Endothelial cell of umbilical vein (primary cell): ENCODE measurements at regions of chr7 and their contacts with region 1.

Region 1: GRCh38 chr7:116354546-116355408 is 144.4 kb downstream of the TES start:
- DNase-seq: peak; percentile 99
- H3K4me3 ChIP-seq: peak overlapping the region in 1 of 3 experiments; percentile 14
- H3K27ac ChIP-seq: peak overlapping the region; percentile 99
- H3K4me1 ChIP-seq: peaks cover 63% of the 10 kb centered on the region
- H3K27me3 ChIP-seq: no peaks in the 10 kb centered on the region
- CTCF ChIP-seq: no peak
- POLR2A ChIP-seq: no peak

Region 2: GRCh38 chr7:116258734-116259133 is 96.0 kb before region 1 on chr7:
- CTCF ChIA-PET with region 1: interaction called, 4 read pairs
- POLR2A ChIA-PET with region 1: interaction called, 4 read pairs
- dilution Hi-C with region 1: no loop called
- intact Hi-C with region 1: loop called (anchors 1 kb)
- DNase-seq: peak; percentile 85
- H3K4me3 ChIP-seq: no peak overlapping the region
- H3K27ac ChIP-seq: peak overlapping the region; percentile 32
- H3K4me1 ChIP-seq: peaks cover 28% of the 10 kb centered on the region
- H3K27me3 ChIP-seq: no peaks in the 10 kb centered on the region
- CTCF ChIP-seq: peak; percentile 43 to 48
- POLR2A ChIP-seq: peak; percentile 22

Region 3: DNA sequence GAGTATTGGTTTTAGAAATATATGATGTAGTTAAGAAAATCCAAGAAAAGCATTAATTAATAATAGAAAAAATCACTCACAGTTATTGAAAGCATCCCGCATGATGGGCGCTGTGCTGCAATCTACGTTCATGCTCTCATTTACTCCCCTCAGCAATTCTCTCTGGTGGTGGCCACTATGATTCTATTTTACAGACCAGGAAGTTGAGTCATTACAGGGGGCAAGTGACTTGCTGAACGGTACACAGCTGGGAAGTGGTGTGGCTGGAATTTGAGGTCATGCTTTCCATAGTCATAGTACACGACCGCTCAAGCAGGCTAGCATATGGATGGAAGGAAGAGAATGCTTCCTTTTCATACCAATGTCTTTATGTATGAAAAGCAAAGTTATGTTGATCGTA is 27.0 kb before region 1 on chr7:
- CTCF ChIA-PET with region 1: interaction called, 5 read pairs
- POLR2A ChIA-PET with region 1: interaction called, 3 read pairs
- dilution Hi-C with region 1: no loop called
- intact Hi-C with region 1: loop called (anchors 1 kb)
- DNase-seq: peak; percentile 97
- H3K4me3 ChIP-seq: peak overlapping the region; percentile 43 to 99 (median 98)
- H3K27ac ChIP-seq: peak overlapping the region; percentile 97
- H3K4me1 ChIP-seq: peaks cover 48% of the 10 kb centered on the region
- H3K27me3 ChIP-seq: no peaks in the 10 kb centered on the region
- CTCF ChIP-seq: no peak
- POLR2A ChIP-seq: peak; percentile 97

Region 4: DNA sequence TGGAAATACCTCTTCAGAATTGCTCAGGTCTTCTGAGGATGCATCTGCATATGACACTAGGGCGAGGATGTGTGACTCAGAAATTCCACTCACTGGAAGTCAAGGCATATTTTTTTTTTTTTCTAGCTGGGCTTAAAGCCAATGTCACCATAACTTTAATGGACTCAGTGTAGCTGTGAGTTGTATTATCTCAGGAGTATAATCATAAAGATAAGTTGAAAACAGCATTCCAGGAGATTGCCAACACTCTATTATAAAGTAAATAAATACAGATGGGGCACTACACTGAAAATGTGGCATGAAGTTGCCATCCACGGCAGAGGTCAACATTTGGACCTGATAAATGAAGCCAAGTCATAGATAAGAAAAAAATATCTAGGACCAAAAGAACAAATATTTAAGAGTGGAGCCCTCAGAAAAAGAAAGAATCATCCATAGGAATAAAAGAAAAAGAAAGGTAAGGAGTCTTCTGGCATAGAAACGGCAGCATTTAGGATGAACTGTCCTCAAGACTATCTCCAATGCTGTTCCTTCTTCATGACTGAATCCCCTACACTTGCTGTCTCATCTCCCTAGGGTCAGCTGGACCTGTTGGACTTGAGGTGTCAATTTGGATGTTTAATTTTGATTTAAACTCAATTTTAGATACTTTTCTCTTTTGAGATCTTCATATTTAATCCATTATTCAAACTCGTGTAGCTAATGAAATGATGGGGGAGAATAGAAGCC is 71.8 kb after region 1 on chr7:
- CTCF ChIA-PET with region 1: interaction called, 8 read pairs
- POLR2A ChIA-PET with region 1: interaction called, 5 read pairs
- dilution Hi-C with region 1: no loop called
- intact Hi-C with region 1: loop called (anchors 1 kb)
- DNase-seq: peak; percentile 98
- H3K4me3 ChIP-seq: no peak overlapping the region
- H3K27ac ChIP-seq: peak overlapping the region; percentile 91
- H3K4me1 ChIP-seq: peaks cover 26% of the 10 kb centered on the region
- H3K27me3 ChIP-seq: no peaks in the 10 kb centered on the region
- CTCF ChIP-seq: no peak
- POLR2A ChIP-seq: peak; percentile 65

Region 5: GRCh38 chr7:116511552-116512519 is 157.1 kb after region 1 on chr7:
- CTCF ChIA-PET with region 1: interaction called, 3 read pairs
- POLR2A ChIA-PET with region 1: no interaction called
- dilution Hi-C with region 1: loop called (anchors 25 kb)
- intact Hi-C with region 1: loop called (anchors 1 kb)
- DNase-seq: peak; percentile 96
- H3K4me3 ChIP-seq: peak overlapping the region; percentile 32 to 70 (median 45)
- H3K27ac ChIP-seq: peak overlapping the region; percentile 96
- H3K4me1 ChIP-seq: peaks cover 54% of the 10 kb centered on the region
- H3K27me3 ChIP-seq: no peaks in the 10 kb centered on the region
- CTCF ChIP-seq: no peak
- POLR2A ChIP-seq: peak; percentile 76